Naive thymus-derived CD4-positive, alpha-beta T cell (primary cell): ENCODE measurements at regions of chr16 and their contacts with region 1.

Region 1: GRCh38 chr16:58906981-58907715 is 173.0 kb upstream of the GOT2 start:
- DNase-seq: no peak
- ATAC-seq: no peak
- H3K4me3 ChIP-seq: no peak overlapping the region
- H3K4me3 Mint-ChIP-seq: no peak overlapping the region
- H3K27ac ChIP-seq: no peak overlapping the region
- H3K27ac Mint-ChIP-seq: no peak overlapping the region
- H3K4me1 ChIP-seq: no peaks in the 10 kb centered on the region
- H3K4me1 Mint-ChIP-seq: no peaks in the 10 kb centered on the region
- H3K27me3 ChIP-seq: no peaks in the 10 kb centered on the region
- H3K27me3 Mint-ChIP-seq: no peaks in the 10 kb centered on the region

Region 2: DNA sequence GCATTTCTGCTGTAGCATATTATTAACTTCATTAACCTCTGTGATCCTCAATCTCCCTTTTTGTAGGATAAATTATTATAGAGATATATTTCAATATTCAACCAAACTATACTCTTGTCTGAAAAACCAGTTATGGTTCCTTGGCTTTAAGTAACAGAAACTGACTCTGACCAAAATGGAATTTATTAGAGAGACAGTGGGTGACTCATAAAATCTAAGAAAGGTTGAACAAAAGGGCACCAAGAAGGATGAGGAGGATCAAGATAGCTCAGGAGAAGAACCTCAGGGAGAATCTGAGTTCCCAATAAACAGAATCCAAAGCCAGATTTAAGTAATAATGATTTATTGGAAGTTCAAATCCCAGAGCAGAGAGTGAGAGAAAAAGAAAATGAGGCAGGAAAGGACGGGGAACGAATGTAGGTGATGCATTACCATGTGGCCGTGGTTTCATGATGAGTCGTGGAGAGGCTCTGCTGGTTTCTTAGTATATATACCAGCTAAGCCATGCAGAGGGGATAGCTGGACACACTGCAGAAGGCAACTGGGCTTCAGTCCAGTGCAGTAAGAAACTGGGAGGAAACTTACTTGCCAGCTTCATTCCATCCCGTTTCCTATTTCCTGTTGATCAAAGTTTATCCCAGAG is 21.5 kb before region 1 on chr16:
- CTCF ChIA-PET with region 1: no interaction called
- POLR2A ChIA-PET with region 1: no interaction called
- intact Hi-C with region 1: loop called in 1 of 2 experiments (anchors 2 kb)
- DNase-seq: no peak
- ATAC-seq: no peak
- H3K4me3 ChIP-seq: no peak overlapping the region
- H3K4me3 Mint-ChIP-seq: no peak overlapping the region
- H3K27ac ChIP-seq: no peak overlapping the region
- H3K27ac Mint-ChIP-seq: no peak overlapping the region
- H3K4me1 ChIP-seq: no peaks in the 10 kb centered on the region
- H3K4me1 Mint-ChIP-seq: peaks cover 0 to 4% (median 0%) of the 10 kb centered on the region in 7 donors
- H3K27me3 ChIP-seq: no peaks in the 10 kb centered on the region
- H3K27me3 Mint-ChIP-seq: peaks cover 0 to 25% (median 20%) of the 10 kb centered on the region in 5 donors

Region 3: DNA sequence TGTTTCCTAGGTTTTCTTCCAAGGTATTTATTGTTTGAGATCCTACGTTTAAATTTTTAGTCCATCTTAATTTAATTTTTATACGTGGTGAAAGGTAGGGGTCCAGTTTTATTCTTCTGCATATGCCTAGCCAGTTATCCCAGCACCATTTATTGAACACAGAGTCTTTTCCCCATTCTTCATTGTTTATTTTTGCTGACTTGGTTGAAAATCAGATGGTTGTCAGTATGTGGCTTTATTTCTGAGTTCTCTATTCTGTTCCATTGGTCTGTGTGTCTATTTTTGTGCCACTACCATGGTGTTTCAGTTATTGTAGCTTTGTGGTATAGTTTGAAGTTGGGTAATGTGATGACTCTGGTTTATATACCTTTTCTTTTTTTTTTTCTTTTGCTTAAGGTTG is 579.9 kb after region 1 on chr16:
- CTCF ChIA-PET with region 1: no interaction called
- POLR2A ChIA-PET with region 1: no interaction called
- intact Hi-C with region 1: no loop called
- DNase-seq: no peak
- ATAC-seq: no peak
- H3K4me3 ChIP-seq: no peak overlapping the region
- H3K4me3 Mint-ChIP-seq: no peak overlapping the region
- H3K27ac ChIP-seq: no peak overlapping the region
- H3K27ac Mint-ChIP-seq: no peak overlapping the region
- H3K4me1 ChIP-seq: no peaks in the 10 kb centered on the region
- H3K4me1 Mint-ChIP-seq: no peaks in the 10 kb centered on the region
- H3K27me3 ChIP-seq: no peaks in the 10 kb centered on the region
- H3K27me3 Mint-ChIP-seq: peaks cover 0 to 14% (median 0%) of the 10 kb centered on the region in 5 donors